CD8-positive, alpha-beta memory T cell (primary cell): ENCODE measurements at regions of chr3 and their contacts with region 1.

Region 1: GRCh38 chr3:136752422-136753325 is 496 bp upstream of the STAG1 start:
- DNase-seq: peak; percentile 97 to 99 (median 99)
- H3K4me3 ChIP-seq: peak overlapping the region; percentile 60
- H3K4me3 Mint-ChIP-seq: peak overlapping the region; percentile 78 to 99 (median 93)
- H3K27ac ChIP-seq: peak overlapping the region; percentile 86
- H3K27ac Mint-ChIP-seq: peak overlapping the region; percentile 93 to 100 (median 97)
- H3K4me1 ChIP-seq: peaks cover 33% of the 10 kb centered on the region
- H3K4me1 Mint-ChIP-seq: peaks cover 44 to 45% (median 45%) of the 10 kb centered on the region in 3 donors
- H3K27me3 ChIP-seq: no peaks in the 10 kb centered on the region
- H3K27me3 Mint-ChIP-seq: peaks cover 0 to 3% of the 10 kb centered on the region in 2 donors

Region 2: GRCh38 chr3:136250226-136250902 is 502.3 kb before region 1 on chr3 and contains the start of gene PCCB:
- CTCF ChIA-PET with region 1: interaction called, 20 read pairs
- POLR2A ChIA-PET with region 1: interaction called, 3 read pairs
- DNase-seq: peak; percentile 82 to 96 (median 92)
- H3K4me3 ChIP-seq: peak within 1 kb of the TSS; percentile 87
- H3K4me3 Mint-ChIP-seq: peak within 1 kb of the TSS; percentile 91 to 95 (median 93)
- H3K27ac ChIP-seq: peak within 1 kb of the TSS; percentile 72
- H3K27ac Mint-ChIP-seq: peak within 1 kb of the TSS; percentile 83 to 95 (median 93)
- H3K4me1 ChIP-seq: peaks cover 15% of the 10 kb centered on the region
- H3K4me1 Mint-ChIP-seq: peaks cover 17 to 26% (median 21%) of the 10 kb centered on the region in 3 donors
- H3K27me3 ChIP-seq: no peaks in the 10 kb centered on the region
- H3K27me3 Mint-ChIP-seq: no peaks in the 10 kb centered on the region
- total RNA-seq, gene PCCB: 40.6 to 41.7 TPM

Region 3: GRCh38 chr3:136545664-136546268 is 206.9 kb before region 1 on chr3:
- CTCF ChIA-PET with region 1: interaction called, 26 read pairs
- POLR2A ChIA-PET with region 1: interaction called, 4 read pairs
- DNase-seq: no peak
- H3K4me3 ChIP-seq: no peak overlapping the region
- H3K4me3 Mint-ChIP-seq: no peak overlapping the region
- H3K27ac ChIP-seq: no peak overlapping the region
- H3K27ac Mint-ChIP-seq: peak overlapping the region in 1 of 8 donors; percentile 73
- H3K4me1 ChIP-seq: no peaks in the 10 kb centered on the region
- H3K4me1 Mint-ChIP-seq: peaks cover 28 to 50% (median 46%) of the 10 kb centered on the region in 3 donors
- H3K27me3 ChIP-seq: no peaks in the 10 kb centered on the region
- H3K27me3 Mint-ChIP-seq: no peaks in the 10 kb centered on the region

Region 4: GRCh38 chr3:136562026-136562425 is 190.6 kb before region 1 on chr3:
- CTCF ChIA-PET with region 1: no interaction called
- POLR2A ChIA-PET with region 1: no interaction called
- DNase-seq: no peak
- H3K4me3 ChIP-seq: no peak overlapping the region
- H3K4me3 Mint-ChIP-seq: no peak overlapping the region
- H3K27ac ChIP-seq: no peak overlapping the region
- H3K27ac Mint-ChIP-seq: no peak overlapping the region
- H3K4me1 ChIP-seq: no peaks in the 10 kb centered on the region
- H3K4me1 Mint-ChIP-seq: peaks cover 10 to 36% (median 18%) of the 10 kb centered on the region in 3 donors
- H3K27me3 ChIP-seq: no peaks in the 10 kb centered on the region
- H3K27me3 Mint-ChIP-seq: no peaks in the 10 kb centered on the region

Region 5: DNA sequence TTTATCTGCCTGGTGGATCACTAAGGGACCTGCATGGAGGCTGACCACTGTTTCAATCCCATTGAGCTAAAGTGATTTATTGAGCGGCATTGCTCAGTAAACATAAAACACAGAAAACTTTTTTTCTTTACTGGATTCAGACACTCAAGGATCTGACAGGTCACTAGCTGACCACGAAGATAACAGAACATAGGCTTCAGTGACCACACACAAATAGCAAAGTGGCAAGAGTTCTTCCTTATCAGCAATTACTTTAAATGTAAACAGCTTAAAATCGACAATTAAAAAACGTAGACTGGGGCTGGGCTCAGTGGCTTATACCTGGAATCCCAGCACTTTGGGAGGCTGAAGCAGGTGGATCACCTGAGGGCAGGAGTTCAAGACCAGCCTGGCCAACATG is 49.2 kb before region 1 on chr3:
- CTCF ChIA-PET with region 1: interaction called, 10 read pairs
- POLR2A ChIA-PET with region 1: no interaction called
- DNase-seq: no peak
- H3K4me3 ChIP-seq: no peak overlapping the region
- H3K4me3 Mint-ChIP-seq: no peak overlapping the region
- H3K27ac ChIP-seq: no peak overlapping the region
- H3K27ac Mint-ChIP-seq: no peak overlapping the region
- H3K4me1 ChIP-seq: no peaks in the 10 kb centered on the region
- H3K4me1 Mint-ChIP-seq: peaks cover 50 to 71% (median 61%) of the 10 kb centered on the region in 3 donors
- H3K27me3 ChIP-seq: no peaks in the 10 kb centered on the region
- H3K27me3 Mint-ChIP-seq: no peaks in the 10 kb centered on the region

Region 6: GRCh38 chr3:136741063-136741462 is 11.6 kb before region 1 on chr3:
- CTCF ChIA-PET with region 1: interaction called, 16 read pairs
- POLR2A ChIA-PET with region 1: interaction called, 3 read pairs
- DNase-seq: no peak
- H3K4me3 ChIP-seq: no peak overlapping the region
- H3K4me3 Mint-ChIP-seq: no peak overlapping the region
- H3K27ac ChIP-seq: no peak overlapping the region
- H3K27ac Mint-ChIP-seq: no peak overlapping the region
- H3K4me1 ChIP-seq: peaks cover 9% of the 10 kb centered on the region
- H3K4me1 Mint-ChIP-seq: peaks cover 43 to 66% (median 54%) of the 10 kb centered on the region in 3 donors
- H3K27me3 ChIP-seq: no peaks in the 10 kb centered on the region
- H3K27me3 Mint-ChIP-seq: no peaks in the 10 kb centered on the region

Region 7: GRCh38 chr3:136919799-136920580 is 167.3 kb after region 1 on chr3:
- CTCF ChIA-PET with region 1: interaction called, 11 read pairs
- POLR2A ChIA-PET with region 1: interaction called, 9 read pairs
- DNase-seq: peak in 3 of 5 donors; percentile 10 to 68 (median 29)
- H3K4me3 ChIP-seq: no peak overlapping the region
- H3K4me3 Mint-ChIP-seq: peak overlapping the region; percentile 10 to 88 (median 72)
- H3K27ac ChIP-seq: peak overlapping the region; percentile 32
- H3K27ac Mint-ChIP-seq: peak overlapping the region; percentile 79 to 99 (median 95)
- H3K4me1 ChIP-seq: peaks cover 65% of the 10 kb centered on the region
- H3K4me1 Mint-ChIP-seq: peaks cover 86 to 96% (median 95%) of the 10 kb centered on the region in 3 donors
- H3K27me3 ChIP-seq: no peaks in the 10 kb centered on the region
- H3K27me3 Mint-ChIP-seq: no peaks in the 10 kb centered on the region